Right lobe of liver (tissue), 6 donors: ENCODE measurements at regions of chr13 and their contacts with region 1.

Region 1: GRCh38 chr13:21137696-21138095 is 38.7 kb downstream of the SKA3 start:
- DNase-seq: no peak
- ATAC-seq: no peak
- H3K4me3 ChIP-seq: no peak overlapping the region
- H3K27ac ChIP-seq: no peak overlapping the region
- H3K4me1 ChIP-seq: peaks cover 0 to 14% (median 5%) of the 10 kb centered on the region in 4 donors
- H3K27me3 ChIP-seq: no peaks in the 10 kb centered on the region
- CTCF ChIP-seq: no peak
- POLR2A ChIP-seq: no peak

Region 2: DNA sequence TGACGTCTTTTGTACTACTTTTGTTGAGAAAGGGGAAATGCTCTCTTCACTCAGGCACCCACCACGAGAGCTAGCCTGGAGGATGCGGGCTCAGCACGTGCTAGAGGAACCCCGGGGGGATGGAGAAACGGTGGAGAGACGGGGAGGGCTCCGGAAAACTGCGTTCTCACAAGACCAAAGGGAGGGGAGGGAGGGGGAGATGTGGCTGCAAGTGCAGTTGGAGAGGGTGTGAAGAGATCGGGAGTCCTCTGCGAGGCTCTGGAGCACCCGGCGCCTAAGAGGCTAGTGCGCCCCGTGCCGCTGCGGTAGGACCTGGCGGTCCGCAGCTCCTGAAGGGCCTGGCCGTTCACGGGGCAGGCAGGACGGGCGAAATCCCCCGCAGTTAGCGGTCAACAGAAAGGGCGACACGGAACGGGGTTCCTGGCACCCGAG is 191.7 kb before region 1 on chr13:
- intact Hi-C with region 1: loop called in 1 of 2 experiments (anchors 10 kb)
- DNase-seq: no peak
- ATAC-seq: peak in 2 of 4 donors; percentile 4 to 19
- H3K4me3 ChIP-seq: no peak overlapping the region
- H3K27ac ChIP-seq: no peak overlapping the region
- H3K4me1 ChIP-seq: peaks cover 0 to 10% (median 0%) of the 10 kb centered on the region in 4 donors
- H3K27me3 ChIP-seq: no peaks in the 10 kb centered on the region
- CTCF ChIP-seq: no peak
- POLR2A ChIP-seq: no peak

Region 3: DNA sequence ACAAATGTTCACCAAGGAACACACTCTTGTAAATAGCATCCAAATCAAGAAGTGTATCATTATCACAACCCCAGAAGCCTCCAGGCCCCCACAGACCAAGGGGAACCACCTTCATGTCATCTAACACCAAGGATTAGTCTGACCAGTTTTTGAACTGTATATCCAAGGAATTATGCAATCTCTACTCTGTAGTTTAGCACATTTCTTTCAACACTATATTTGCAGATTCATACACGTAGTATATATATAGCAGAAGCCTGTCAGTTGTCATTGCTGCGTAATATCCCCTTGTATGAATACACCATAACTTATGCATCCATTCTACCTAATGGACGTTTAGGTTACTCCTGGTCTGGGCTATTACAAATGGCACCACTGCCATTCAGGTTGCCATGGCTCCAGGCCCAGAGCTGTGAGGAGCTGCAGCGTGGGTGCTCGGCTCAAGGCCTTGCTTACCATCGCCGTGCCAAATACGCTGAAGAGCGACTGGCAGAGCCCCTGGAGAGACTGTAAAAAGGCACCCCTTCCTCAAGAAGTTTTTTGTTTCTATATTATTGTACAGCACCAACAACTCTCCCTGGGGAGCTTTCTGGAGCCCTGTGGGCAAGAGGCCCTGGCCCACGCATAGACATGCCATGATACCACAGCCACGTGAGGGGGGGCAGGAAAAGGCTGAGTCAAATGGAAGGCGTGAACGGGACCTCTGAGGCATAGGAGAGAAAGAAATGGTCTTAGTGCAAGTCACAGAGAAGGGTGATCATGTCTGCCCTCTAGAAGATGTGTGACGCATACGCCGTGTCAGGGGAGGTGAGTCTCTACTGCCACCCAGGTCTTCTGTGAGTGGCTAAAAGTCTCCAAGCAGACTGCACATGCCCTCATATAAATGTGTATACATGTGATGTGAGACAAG is 87.2 kb before region 1 on chr13:
- intact Hi-C with region 1: no loop called
- DNase-seq: no peak
- ATAC-seq: no peak
- H3K4me3 ChIP-seq: no peak overlapping the region
- H3K27ac ChIP-seq: no peak overlapping the region
- H3K4me1 ChIP-seq: peaks cover 0 to 8% (median 0%) of the 10 kb centered on the region in 4 donors
- H3K27me3 ChIP-seq: no peaks in the 10 kb centered on the region
- CTCF ChIP-seq: no peak
- POLR2A ChIP-seq: no peak

Region 4: DNA sequence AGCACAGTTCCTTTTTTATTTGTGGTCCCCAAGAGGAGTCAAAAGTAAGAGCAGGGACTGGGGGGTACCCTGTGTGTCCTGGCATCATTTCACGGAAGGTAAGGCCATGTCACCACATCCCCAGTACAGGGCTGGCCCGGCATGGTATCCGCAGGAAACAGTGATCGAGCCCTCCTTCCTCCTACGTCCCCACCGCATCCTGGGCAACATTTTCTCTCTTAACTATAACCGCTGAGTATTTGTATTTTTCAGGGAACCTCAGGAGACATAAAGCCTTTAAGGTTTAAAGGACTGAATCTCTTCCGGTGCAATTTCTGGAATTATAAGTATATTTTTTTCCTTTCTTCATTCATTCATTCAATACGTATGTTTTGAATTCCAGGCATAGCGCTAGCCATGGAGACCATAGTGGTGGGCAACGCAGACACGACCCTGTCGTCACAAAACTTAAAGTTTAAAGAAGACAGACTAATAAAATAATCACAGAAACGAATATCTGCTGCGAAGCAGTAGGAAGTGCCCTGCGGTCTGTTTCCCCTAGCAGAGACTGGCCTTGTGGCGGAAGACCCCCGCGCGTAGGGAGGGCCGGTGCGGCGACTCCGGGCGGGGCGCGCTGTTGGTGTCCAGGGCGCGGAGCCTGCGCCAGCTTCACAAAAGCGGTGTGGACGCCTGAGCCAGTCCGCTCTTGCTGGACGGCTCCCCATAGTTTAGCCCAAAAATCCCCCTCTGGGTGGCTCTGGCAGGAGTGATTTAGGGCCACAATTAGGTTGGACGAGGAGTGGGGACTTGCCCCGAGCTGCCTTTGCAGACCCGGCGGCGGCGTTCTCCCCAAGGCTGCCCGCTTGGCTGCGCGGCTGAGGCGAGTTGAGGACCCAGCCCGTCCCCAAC is 62.4 kb before region 1 on chr13:
- intact Hi-C with region 1: loop called in 1 of 2 experiments (anchors 10 kb)
- DNase-seq: peak in 1 of 3 donors; percentile 38
- ATAC-seq: peak; percentile 64 to 71 (median 66)
- H3K4me3 ChIP-seq: peak overlapping the region; percentile 34 to 50 (median 35)
- H3K27ac ChIP-seq: peak overlapping the region; percentile 10 to 57 (median 13)
- H3K4me1 ChIP-seq: peaks cover 0 to 5% (median 0%) of the 10 kb centered on the region in 4 donors
- H3K27me3 ChIP-seq: no peaks in the 10 kb centered on the region
- CTCF ChIP-seq: no peak
- POLR2A ChIP-seq: no peak